ENCODE measurements at regions of chr17 and their contacts with region 1.

Region 1: GRCh38 chr17:7045909-7046724 is 2.2 kb upstream of the SLC16A11 start:
- DNase-seq: peak; percentile 90 to 95 (median 94)
- ATAC-seq: peak; percentile 89
- H3K4me3 ChIP-seq: no peak overlapping the region
- H3K27ac ChIP-seq: peak overlapping the region; percentile 56 to 80 (median 72)
- H3K4me1 ChIP-seq: peaks cover 44% of the 10 kb centered on the region
- H3K27me3 ChIP-seq: peaks cover 0 to 18% of the 10 kb centered on the region in 2 donors
- CTCF ChIP-seq: peak; percentile 39 to 97 (median 90)
- POLR2A ChIP-seq: peak in 1 of 3 donors; percentile 29

Region 2: DNA sequence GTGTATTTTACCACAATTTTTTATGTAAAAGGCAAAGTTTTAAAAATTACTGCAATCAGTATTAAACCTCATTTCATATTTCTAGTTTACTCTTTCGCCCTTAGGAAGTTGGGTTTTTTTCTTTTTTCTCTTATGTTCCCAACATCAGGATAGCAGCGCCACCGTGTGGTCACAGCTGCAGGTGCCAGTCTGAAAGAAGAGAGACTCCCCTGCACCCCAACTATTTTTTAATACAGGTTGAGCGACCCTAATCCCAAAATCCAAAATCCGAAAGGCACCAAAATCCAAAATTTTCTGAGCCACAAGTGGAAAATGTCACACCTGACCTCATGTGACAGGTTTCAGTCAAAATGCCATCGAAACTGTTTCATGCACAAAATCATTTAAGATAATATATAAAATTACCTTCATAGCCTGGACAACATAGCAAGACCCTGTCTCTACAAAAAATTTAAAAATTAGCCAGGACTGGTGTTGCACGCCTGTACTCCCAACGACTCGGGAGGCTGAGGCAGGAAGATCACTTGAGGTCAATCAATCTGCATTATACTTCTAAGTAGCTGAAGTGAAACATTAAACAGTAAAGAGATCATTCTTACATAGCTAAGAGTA is 90.3 kb after region 1 on chr17:
- intact Hi-C with region 1: loop called (anchors 5 kb)
- DNase-seq: peak; percentile 73 to 85 (median 75)
- ATAC-seq: peak; percentile 56
- H3K4me3 ChIP-seq: no peak overlapping the region
- H3K27ac ChIP-seq: no peak overlapping the region
- H3K4me1 ChIP-seq: no peaks in the 10 kb centered on the region
- H3K27me3 ChIP-seq: peaks cover 0 to 11% of the 10 kb centered on the region in 2 donors
- CTCF ChIP-seq: peak; percentile 56 to 93 (median 84)
- POLR2A ChIP-seq: no peak

Region 3: DNA sequence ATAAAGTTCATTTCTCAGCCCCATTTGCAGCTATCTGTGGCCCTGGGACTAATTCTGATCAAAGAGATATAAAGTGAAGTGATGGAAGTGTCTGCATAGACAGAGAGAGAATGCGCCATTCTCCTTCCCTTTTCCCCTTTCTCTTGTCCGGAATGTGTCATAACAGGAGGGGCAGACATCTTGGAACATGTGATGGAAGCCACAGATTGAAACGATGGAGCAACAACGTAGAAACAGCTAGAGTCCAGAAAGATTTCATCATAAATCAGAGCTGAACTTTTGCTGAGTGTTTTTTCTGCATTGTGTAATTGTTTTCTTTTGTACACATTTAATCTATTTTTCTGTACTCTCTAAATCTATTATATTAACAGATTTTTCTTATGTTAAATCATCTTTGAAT is 121.7 kb after region 1 on chr17:
- intact Hi-C with region 1: no loop called
- DNase-seq: peak in 1 of 4 donors; percentile 36
- ATAC-seq: no peak
- H3K4me3 ChIP-seq: no peak overlapping the region
- H3K27ac ChIP-seq: peak overlapping the region in 1 of 4 donors; percentile 32
- H3K4me1 ChIP-seq: no peaks in the 10 kb centered on the region
- H3K27me3 ChIP-seq: no peaks in the 10 kb centered on the region
- CTCF ChIP-seq: no peak
- POLR2A ChIP-seq: no peak

Measured in body of pancreas (tissue), 4 donors.